IMR-90 (cell line): ENCODE measurements at regions of chr5 and their contacts with region 1.

Region 1: DNA sequence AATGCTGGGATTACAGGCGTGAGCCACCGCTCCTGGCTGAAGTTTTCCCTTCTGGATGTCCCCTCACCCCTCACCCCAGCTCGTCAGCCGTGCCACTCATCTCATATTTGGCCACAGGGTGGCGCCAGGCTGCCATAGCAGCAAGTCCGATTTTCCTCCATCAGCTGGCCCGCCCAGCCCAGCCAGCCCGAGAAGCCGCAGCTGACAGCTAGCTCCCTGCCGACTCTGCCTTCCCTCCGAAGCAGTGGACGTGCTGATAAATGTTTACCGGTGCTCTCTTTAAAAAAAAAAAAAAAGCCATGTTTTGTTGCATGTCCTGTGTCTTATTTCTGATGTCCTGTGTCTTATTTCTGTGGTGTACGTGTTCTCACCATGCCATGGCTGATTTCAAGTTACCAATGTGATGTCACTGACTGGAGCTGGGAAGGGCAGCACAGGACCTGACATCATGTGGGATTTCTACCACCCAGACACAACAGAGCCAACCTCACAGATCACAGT is 58.3 kb downstream of the PFDN1 start:
- DNase-seq: peak; percentile 90
- ATAC-seq: peak; percentile 61
- H3K4me3 ChIP-seq: no peak overlapping the region
- H3K27ac ChIP-seq: no peak overlapping the region
- H3K4me1 ChIP-seq: peaks cover 31% of the 10 kb centered on the region
- H3K27me3 ChIP-seq: no peaks in the 10 kb centered on the region
- CTCF ChIP-seq: peak; percentile 97
- POLR2A ChIP-seq: peak; percentile 50; the same call in 1 of the 2 replicates
- RAD21 ChIP-seq: peak; percentile 97

Region 2: GRCh38 chr5:140174465-140175366 is 69.9 kb before region 1 on chr5 and contains the start of gene CYSTM1:
- CTCF ChIA-PET with region 1: interaction called, 6 read pairs
- POLR2A ChIA-PET with region 1: no interaction called
- dilution Hi-C with region 1: no loop called
- in situ Hi-C with region 1: no loop called
- intact Hi-C with region 1: loop called (anchors 5 kb)
- DNase-seq: peak; percentile 91
- ATAC-seq: peak; percentile 87
- H3K4me3 ChIP-seq: peak within 1 kb of the TSS; percentile 68
- H3K27ac ChIP-seq: peak within 1 kb of the TSS; percentile 11
- H3K4me1 ChIP-seq: peaks cover 8% of the 10 kb centered on the region; the same call in 1 of the 2 replicates
- H3K27me3 ChIP-seq: no peaks in the 10 kb centered on the region
- CTCF ChIP-seq: no peak
- POLR2A ChIP-seq: no peak
- RAD21 ChIP-seq: no peak
- total RNA-seq, gene CYSTM1: 6.7 and 7.3 TPM in 2 replicates

Region 3: GRCh38 chr5:140336388-140336787 is 91.8 kb after region 1 on chr5:
- CTCF ChIA-PET with region 1: interaction called, 10 read pairs
- POLR2A ChIA-PET with region 1: interaction called, 7 read pairs
- dilution Hi-C with region 1: no loop called
- in situ Hi-C with region 1: no loop called
- intact Hi-C with region 1: no loop called
- DNase-seq: no peak
- ATAC-seq: 0 out of 2 replicates have a peak, but pooled peaks have one; percentile 28
- H3K4me3 ChIP-seq: no peak overlapping the region
- H3K27ac ChIP-seq: no peak overlapping the region
- H3K4me1 ChIP-seq: peaks cover 6% of the 10 kb centered on the region
- H3K27me3 ChIP-seq: no peaks in the 10 kb centered on the region
- CTCF ChIP-seq: no peak
- POLR2A ChIP-seq: no peak
- RAD21 ChIP-seq: no peak

Region 4: GRCh38 chr5:140351609-140352334 is 107.2 kb after region 1 on chr5:
- CTCF ChIA-PET with region 1: interaction called, 233 read pairs
- POLR2A ChIA-PET with region 1: interaction called, 3 read pairs
- dilution Hi-C with region 1: no loop called
- in situ Hi-C with region 1: loop called (anchors 5 kb)
- intact Hi-C with region 1: loop called (anchors 1 kb)
- DNase-seq: peak; percentile 70
- ATAC-seq: peak; percentile 83
- H3K4me3 ChIP-seq: no peak overlapping the region
- H3K27ac ChIP-seq: no peak overlapping the region
- H3K4me1 ChIP-seq: no peaks in the 10 kb centered on the region
- H3K27me3 ChIP-seq: no peaks in the 10 kb centered on the region
- CTCF ChIP-seq: peak; percentile 85
- POLR2A ChIP-seq: no peak
- RAD21 ChIP-seq: peak; percentile 84

Region 5: DNA sequence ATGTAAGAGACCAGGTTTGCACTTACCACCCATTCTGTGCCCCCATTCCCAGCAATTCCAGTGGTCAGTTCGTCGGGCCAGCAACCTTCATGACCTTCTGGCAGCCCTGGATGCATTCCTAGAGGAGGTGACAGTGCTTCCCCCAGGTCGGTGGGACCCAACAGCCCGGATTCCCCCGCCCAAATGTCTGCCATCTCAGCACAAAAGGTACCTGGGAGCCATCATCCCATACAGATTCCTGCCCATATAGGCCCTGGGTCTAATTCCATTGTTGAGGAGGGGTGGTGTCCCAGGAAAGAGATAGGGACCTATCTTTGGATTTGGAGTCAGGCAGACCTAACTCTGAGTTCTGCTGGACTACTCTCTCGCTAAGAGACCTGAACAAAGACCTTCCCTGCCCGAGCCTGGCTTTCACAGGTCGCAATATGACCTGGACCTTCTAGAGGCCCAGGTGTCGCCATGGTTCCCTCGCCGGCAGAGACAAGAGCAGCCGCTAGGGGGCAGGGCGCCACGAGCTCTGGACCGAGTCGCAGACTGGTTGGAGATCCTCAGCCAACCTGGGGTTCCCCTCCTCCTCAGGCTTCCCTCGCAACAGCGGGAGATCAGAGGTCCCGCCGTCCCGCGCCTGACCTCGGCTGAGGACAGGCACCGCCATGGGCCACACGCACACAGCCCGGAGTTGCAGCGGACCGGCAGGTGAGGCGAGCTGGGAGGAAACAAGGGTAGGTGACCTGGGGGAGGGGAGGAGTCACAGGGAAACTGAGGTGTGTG is 118.5 kb after region 1 on chr5:
- CTCF ChIA-PET with region 1: interaction called, 34 read pairs
- POLR2A ChIA-PET with region 1: no interaction called
- dilution Hi-C with region 1: no loop called
- in situ Hi-C with region 1: no loop called
- intact Hi-C with region 1: no loop called
- DNase-seq: peak; percentile 46
- ATAC-seq: peak; percentile 91
- H3K4me3 ChIP-seq: peak overlapping the region; percentile 26
- H3K27ac ChIP-seq: no peak overlapping the region
- H3K4me1 ChIP-seq: no peaks in the 10 kb centered on the region
- H3K27me3 ChIP-seq: peaks cover 17% of the 10 kb centered on the region; the same call in 1 of the 2 replicates
- CTCF ChIP-seq: peak; percentile 85
- POLR2A ChIP-seq: no peak
- RAD21 ChIP-seq: peak; percentile 58

Region 6: DNA sequence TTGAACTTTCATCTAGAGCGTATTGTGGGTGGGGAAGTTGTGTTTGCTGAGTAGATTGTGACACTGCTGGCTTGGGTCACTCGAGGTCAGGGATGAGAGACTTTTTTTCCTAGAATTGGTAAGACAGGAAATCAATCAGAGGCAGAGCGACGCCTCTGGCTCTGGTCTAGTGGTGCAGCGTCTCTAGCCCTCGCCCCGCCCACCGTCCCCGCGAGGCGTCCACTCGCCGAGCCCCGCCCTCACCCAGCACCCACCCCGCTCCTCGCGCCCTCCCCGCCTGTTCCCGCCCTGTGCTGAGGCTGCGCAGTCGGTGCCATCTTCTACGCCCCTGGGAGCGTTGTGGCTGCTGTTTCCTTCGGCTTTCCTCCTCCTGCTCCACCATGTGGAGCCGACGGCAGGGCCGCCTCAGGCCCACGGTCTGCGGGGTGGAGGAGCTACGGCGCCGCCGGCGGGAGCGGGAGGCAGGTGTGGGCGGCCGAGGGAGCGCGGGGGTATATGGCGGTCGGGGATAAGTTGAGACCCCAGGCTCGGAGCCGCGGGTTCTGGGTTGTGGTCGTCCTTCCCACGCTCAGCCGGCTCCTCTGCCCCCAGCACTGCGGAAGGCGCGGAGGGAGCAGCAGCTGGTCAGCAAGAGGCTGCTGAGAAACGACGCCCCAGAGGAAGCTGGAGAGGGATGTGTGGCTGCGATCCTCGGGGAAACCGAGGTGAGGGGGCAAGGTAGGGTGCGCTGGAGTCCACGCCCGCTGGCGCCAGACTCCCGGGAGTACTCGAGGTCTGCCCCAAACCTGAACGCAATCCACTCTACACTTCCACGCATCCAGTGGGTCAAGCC is 394.8 kb after region 1 on chr5 and contains the start of gene TMCO6:
- CTCF ChIA-PET with region 1: no interaction called
- POLR2A ChIA-PET with region 1: no interaction called
- dilution Hi-C with region 1: no loop called
- in situ Hi-C with region 1: no loop called
- intact Hi-C with region 1: loop called (anchors 10 kb)
- DNase-seq: peak; percentile 89
- ATAC-seq: peak; percentile 99
- H3K4me3 ChIP-seq: peak within 1 kb of the TSS; percentile 70
- H3K27ac ChIP-seq: peak within 1 kb of the TSS; percentile 74
- H3K4me1 ChIP-seq: peaks cover 3% of the 10 kb centered on the region
- H3K27me3 ChIP-seq: no peaks in the 10 kb centered on the region
- CTCF ChIP-seq: peak; percentile 58
- POLR2A ChIP-seq: no peak
- RAD21 ChIP-seq: peak; percentile 44
- total RNA-seq, gene TMCO6: 4.2 and 6.6 TPM in 2 replicates

Region 7: DNA sequence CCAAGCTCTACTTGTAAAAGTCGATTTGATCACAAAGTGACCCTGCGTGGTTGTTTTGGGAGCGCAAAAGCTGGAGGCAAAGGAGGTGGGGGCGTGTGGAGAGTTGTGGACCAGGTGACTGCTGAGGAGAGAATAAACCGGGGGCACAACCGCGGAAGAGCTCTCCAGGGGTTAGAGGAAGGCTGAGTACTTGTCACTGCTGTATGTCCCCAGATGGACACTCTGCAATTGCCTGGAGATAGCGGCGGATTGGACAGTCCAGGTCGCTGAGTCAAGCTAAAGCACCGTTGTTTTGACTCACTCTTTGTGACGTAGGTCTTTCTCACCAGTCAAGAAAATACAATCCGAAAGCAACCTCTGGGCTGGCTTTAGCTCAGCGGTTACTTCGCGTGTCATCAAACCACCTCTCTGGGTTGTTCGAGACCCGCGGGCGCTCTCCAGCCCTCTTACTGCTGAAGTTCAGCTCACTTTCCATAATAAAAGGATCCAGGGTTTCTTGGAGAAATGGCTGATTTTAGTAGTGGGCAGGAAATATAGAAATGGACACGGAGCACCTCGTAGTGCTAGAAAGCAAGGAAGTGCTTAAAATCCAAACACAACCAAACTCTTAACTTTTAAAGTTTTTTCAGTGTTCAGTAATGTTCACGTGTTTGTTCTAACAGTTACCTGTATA is 481.4 kb after region 1 on chr5:
- CTCF ChIA-PET with region 1: no interaction called
- POLR2A ChIA-PET with region 1: no interaction called
- dilution Hi-C with region 1: no loop called
- in situ Hi-C with region 1: no loop called
- intact Hi-C with region 1: loop called (anchors 10 kb)
- DNase-seq: peak; percentile 94
- ATAC-seq: peak; percentile 97
- H3K4me3 ChIP-seq: peak overlapping the region; percentile 38
- H3K27ac ChIP-seq: no peak overlapping the region
- H3K4me1 ChIP-seq: no peaks in the 10 kb centered on the region
- H3K27me3 ChIP-seq: no peaks in the 10 kb centered on the region
- CTCF ChIP-seq: no peak
- POLR2A ChIP-seq: no peak
- RAD21 ChIP-seq: no peak